Dorsolateral prefrontal cortex (tissue), 120 donors: ENCODE measurements at regions of chr3 and their contacts with region 1.

Region 1: GRCh38 chr3:87167628-87168456 is 59.3 kb upstream of the CHMP2B start:
- DNase-seq: peak in 2 of 10 donors; percentile 7 to 34
- H3K4me3 ChIP-seq: peak overlapping the region; percentile 20 to 72 (median 54)
- H3K27ac ChIP-seq: peak overlapping the region in 5 of 59 donors; percentile 19 to 61 (median 26)
- H3K27me3 ChIP-seq: no peaks in the 10 kb centered on the region
- CTCF ChIP-seq: peak; percentile 57 to 92 (median 80)

Region 2: GRCh38 chr3:86774082-86774691 is 393.7 kb before region 1 on chr3:
- intact Hi-C with region 1: loop called (anchors 5 kb)
- DNase-seq: no peak
- H3K4me3 ChIP-seq: no peak overlapping the region
- H3K27ac ChIP-seq: no peak overlapping the region
- H3K27me3 ChIP-seq: peaks cover 0 to 9% (median 0%) of the 10 kb centered on the region in 45 donors
- CTCF ChIP-seq: peak; percentile 52 to 91 (median 74)

Region 3: DNA sequence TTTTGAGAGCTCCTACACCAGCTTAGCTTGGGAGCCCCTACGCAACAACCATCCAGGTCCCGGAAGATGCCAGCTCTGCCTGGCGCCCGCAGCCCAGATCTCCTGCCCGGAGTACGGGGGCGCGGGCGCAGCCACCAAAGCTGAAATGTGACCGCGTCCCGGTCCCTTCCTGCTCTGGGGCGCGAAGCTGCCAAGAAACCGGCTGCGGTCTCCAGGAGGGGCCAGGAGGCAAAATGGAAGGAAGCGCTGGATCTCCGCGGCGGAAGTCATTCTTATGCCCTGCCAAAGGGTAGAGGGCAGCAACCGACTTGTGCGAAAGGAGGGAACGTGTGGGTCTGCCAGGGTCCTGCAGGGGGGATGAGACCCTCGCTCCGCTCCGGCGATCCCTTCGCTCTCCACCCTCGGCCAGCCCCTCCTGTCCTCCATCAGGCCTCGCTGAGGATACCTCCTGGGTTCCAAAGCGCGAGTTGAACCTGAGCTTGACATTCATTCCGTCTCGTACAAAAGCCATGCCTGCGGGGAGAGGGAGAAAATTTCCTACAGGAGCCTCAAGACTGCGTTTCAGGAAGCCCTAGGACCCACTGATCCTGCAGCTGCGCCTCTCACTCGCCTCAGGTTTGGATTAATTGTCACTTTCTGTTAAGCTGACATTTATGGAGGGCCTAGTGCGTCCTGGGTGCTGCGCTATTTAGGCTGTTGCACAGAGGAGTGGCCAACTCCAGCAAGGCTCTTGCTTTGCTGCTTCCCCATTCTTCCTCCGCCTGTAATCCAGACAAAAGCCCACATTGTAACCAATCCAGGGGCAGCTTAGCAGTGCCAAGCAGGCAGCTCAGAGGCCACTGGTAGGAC is 78.6 kb before region 1 on chr3:
- intact Hi-C with region 1: loop called (anchors 5 to 10 kb)
- DNase-seq: peak; percentile 7 to 87 (median 72)
- H3K4me3 ChIP-seq: peak overlapping the region; percentile 51 to 90 (median 77)
- H3K27ac ChIP-seq: peak overlapping the region; percentile 77 to 99 (median 94)
- H3K27me3 ChIP-seq: no peaks in the 10 kb centered on the region
- CTCF ChIP-seq: peak in 13 of 56 donors; percentile 3 to 40 (median 13)

Region 4: DNA sequence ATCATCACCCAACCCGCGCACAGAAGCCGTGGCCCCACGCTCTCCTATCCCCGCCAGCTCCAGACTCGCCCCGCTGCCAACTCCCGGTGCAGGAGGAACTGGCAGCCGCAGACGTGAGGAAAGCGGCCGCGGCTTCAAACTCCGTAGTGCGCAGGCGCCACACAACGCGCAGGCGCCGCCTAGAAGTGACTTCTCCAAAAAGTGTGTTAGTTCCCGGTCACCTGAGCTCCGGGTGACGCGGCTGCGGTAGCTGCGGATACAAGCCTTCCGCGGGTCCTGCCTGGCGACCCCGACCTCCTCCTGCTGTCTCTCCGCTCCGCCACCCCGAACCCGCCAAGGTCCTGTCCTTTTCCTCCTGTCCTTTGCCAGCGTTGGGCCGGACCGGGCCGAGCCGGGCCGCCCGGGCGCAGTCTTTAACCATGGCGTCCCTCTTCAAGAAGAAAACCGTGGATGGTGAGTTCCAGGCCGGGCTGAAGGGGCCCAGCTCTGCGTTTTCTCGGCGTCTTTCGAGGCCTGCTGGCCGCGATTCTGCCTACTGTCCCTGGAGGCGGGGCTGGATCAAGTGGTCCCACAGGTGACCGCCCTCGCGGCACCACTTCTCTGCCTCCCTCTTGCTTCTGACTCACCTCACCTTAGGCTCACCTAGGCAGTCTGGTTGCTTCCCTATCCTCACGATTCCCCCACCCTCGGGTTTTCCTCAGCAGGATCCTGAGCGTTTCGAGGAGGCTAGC is 59.4 kb after region 1 on chr3 and contains the start of gene CHMP2B:
- intact Hi-C with region 1: loop called in 1 of 2 experiments (anchors 5 kb)
- DNase-seq: peak; percentile 88 to 95 (median 92)
- H3K4me3 ChIP-seq: peak within 1 kb of the TSS; percentile 56 to 100 (median 95)
- H3K27ac ChIP-seq: peak within 1 kb of the TSS; percentile 56 to 97 (median 89)
- H3K27me3 ChIP-seq: no peaks in the 10 kb centered on the region
- CTCF ChIP-seq: peak in 24 of 56 donors; percentile 1 to 49 (median 22)
- total RNA-seq, gene CHMP2B: 23.8 to 49.2 (median 34.7) TPM